RWPE1 (cell line): ENCODE measurements at regions of chr1 and their contacts with region 1.

Region 1: DNA sequence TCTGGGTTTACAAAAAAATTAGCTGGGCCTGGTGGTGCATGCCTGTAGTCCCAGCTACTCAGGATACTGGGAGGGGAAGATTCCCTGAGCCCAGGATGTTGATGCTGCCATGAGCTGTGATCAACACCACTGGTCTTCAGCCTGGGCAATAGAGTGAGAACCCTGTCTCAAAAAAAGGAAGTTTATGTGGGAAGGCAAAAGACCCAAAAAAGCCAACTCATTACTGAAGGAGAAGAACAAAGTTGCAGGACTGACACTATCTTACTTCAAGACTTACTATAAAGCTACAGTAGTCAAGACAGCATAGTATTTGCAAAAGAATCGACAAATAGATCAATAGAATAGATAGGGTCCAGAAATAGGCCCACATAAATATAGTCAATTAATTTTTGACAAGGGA is 9.2 kb upstream of the PTGS2 start:
- DNase-seq: no peak
- H3K27ac ChIP-seq: no peak overlapping the region
- CTCF ChIP-seq: no peak

Region 2: DNA sequence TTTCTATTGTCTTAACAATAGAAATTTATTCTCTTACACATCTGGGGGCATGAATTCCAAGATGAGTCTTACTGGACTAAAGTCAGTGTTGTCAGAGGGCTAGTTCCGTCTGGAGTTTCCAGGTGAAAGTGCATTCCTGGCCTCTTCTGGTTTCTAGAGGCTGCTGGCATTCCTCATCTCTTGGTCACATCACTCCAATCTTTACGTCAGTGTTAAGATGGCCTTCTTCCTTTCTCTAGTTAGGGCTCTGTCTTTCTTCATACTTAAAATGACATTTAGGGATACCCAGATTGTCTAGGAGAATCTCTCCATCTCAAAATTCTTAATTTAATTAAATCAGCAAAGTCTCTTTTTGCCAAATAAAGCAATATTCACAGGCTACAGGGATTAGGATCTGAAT is 215.2 kb before region 1 on chr1:
- CTCF ChIA-PET with region 1: interaction called, 10 read pairs
- POLR2A ChIA-PET with region 1: no interaction called
- DNase-seq: no peak
- H3K27ac ChIP-seq: no peak overlapping the region
- CTCF ChIP-seq: no peak

Region 3: DNA sequence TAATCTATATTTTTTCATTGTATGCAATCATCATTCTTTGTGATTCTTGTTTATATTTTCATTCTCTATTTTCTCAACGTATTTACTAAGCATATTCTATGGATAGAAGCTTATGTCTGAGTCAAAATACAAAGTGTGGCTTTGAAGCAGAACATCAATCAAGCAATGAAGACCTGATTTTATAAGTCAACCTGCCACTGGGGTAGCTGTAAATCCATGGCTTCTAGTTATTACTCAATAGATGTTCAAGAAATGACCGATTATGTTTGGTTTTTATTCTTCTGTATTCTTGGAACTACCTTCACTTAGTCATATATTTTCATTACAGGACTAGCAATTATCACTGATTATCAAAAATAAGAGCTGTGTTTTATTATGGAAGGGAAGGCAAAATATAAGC is 11.3 kb after region 1 on chr1:
- CTCF ChIA-PET with region 1: no interaction called
- POLR2A ChIA-PET with region 1: no interaction called
- DNase-seq: no peak
- H3K27ac ChIP-seq: no peak overlapping the region
- CTCF ChIP-seq: no peak